Gastrocnemius medialis (tissue), 4 donors: ENCODE measurements at regions of chr10 and their contacts with region 1.

Region 1: DNA sequence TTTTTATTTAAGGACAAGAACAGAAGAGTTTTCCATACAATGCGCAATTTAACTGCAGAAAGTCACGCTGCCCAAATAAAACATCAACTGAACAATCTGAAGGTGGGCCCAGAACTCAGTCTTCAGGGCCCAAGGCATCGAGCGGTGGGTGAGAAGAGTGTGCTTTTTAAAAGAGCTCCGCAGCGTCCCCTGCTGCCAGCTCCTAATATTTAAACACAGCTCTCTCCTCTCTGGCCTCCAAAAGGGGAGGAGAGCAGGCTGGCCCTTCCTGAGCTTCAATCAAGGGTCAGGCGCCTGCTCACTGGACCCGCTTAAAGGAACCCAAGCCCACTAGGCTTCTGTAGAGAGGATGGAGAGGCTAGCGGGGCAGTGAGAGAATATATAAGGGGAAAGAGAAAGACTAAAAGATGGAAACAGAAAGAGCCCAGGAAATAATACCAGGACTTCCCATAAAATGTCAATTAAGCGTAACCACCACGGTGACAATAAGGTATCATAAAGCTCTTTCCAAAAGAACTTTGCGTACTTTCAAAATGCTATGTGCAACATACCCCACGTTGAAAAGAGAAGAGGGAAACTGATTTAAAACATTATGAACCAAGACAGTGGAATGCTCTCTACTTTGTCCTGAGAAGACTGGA is 2.8 kb downstream of the FAM53B start:
- DNase-seq: peak; percentile 82 to 90
- ATAC-seq: peak; percentile 42 to 54
- H3K4me3 ChIP-seq: peak overlapping the region; percentile 69 to 88 (median 78)
- H3K27ac ChIP-seq: peak overlapping the region; percentile 92 to 97 (median 92)
- H3K4me1 ChIP-seq: peaks cover 73 to 76% of the 10 kb centered on the region in 2 donors
- H3K27me3 ChIP-seq: no peaks in the 10 kb centered on the region
- CTCF ChIP-seq: peak; percentile 87 to 98 (median 96)
- POLR2A ChIP-seq: peak; percentile 31 to 47

Region 2: DNA sequence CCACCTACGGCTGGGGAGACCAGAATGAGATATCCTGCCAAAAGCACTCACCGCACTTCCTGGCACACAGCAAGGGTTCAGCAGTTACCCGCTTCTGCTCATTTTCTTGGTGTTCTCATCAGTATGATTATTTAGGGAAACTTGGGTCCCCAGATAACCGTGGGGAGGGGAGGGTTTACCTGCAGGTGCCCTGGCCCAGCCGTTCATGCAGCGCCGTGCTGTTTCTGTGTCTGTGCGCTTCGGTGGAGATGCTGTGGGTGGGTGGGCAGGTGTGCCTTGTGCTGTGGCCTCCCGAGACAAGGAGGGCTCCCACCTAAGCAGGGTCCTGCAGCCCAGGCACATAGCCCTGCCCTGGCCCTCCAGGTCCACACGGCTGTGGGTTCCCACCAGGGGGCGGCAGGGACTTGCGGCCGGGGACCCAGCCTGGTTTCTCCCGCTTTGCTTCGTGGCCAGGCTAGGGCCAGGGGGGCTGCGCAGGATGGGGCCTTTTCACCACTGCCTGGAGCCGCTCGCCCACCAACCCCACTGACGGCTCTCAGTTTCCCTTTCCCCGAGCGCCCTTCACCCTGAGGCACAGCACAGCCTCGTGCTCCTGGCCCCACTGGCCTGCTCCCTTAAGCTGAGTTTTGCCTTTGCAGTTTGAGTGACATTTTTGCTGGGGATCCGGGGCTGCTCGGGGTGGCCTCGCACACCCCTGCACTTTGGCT is 201.3 kb before region 1 on chr10:
- in situ Hi-C with region 1: loop called (anchors 5 to 25 kb)
- intact Hi-C with region 1: no loop called
- DNase-seq: peak; percentile 42 to 64
- ATAC-seq: peak; percentile 75 to 82
- H3K4me3 ChIP-seq: peak overlapping the region in 3 of 4 donors; percentile 6 to 29 (median 29)
- H3K27ac ChIP-seq: peak overlapping the region in 1 of 4 donors; percentile 37
- H3K4me1 ChIP-seq: peaks cover 13 to 15% of the 10 kb centered on the region in 2 donors
- H3K27me3 ChIP-seq: no peaks in the 10 kb centered on the region
- CTCF ChIP-seq: peak; percentile 93 to 95 (median 94)
- POLR2A ChIP-seq: no peak

Region 3: GRCh38 chr10:124632064-124632531 is 109.3 kb before region 1 on chr10:
- in situ Hi-C with region 1: loop called in 3 of 4 experiments (anchors 10 to 25 kb)
- intact Hi-C with region 1: loop called (anchors 1 kb)
- DNase-seq: peak; percentile 69 to 77
- ATAC-seq: peak; percentile 62 to 63
- H3K4me3 ChIP-seq: no peak overlapping the region
- H3K27ac ChIP-seq: peak overlapping the region; percentile 36 to 88 (median 77)
- H3K4me1 ChIP-seq: peaks cover 61 to 66% of the 10 kb centered on the region in 2 donors
- H3K27me3 ChIP-seq: no peaks in the 10 kb centered on the region
- CTCF ChIP-seq: peak; percentile 43 to 75 (median 68)
- POLR2A ChIP-seq: no peak

Region 4: GRCh38 chr10:124688889-124689670 is 52.3 kb before region 1 on chr10:
- in situ Hi-C with region 1: loop called in 1 of 4 experiments (anchors 5 kb)
- intact Hi-C with region 1: loop called (anchors 5 kb)
- DNase-seq: peak; percentile 82 to 84
- ATAC-seq: peak; percentile 35 to 51
- H3K4me3 ChIP-seq: no peak overlapping the region
- H3K27ac ChIP-seq: peak overlapping the region; percentile 81 to 98 (median 95)
- H3K4me1 ChIP-seq: peaks cover 80 to 95% of the 10 kb centered on the region in 2 donors
- H3K27me3 ChIP-seq: no peaks in the 10 kb centered on the region
- CTCF ChIP-seq: no peak
- POLR2A ChIP-seq: peak in 1 of 2 donors; percentile 31

Region 5: DNA sequence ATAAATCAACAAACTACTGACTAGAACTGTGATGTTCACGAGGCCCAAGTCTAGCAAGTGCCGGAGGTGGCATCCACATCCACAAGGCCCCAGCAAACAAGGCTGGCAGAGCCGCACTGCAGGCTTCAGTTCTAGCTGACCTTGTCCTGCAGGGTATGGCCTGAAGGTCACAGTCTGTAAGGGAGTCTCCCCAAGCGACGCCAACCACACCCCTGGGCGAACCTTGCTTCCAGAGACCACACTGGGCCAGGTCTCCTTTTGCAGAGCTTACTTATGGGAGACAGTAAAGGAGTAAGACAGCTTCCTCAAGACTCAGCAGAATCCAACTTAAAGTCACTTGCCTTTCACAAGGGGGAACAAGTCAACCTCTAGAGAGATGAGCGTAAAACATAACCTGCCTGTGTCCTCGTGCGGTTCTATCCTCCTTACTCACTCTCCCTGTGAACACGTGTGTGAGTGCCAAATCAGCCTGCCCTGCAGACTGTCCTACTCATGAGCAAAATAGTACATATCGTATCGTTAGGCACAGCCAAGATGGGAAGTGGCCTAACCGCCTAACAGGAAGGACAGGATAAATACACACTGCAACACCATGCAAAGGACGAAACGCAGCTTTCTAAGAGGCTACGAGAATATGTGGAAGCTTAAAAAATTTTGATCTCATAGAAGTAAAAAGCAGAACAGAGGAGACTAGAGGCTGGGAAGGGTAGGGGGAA is 19.9 kb before region 1 on chr10:
- in situ Hi-C with region 1: no loop called
- intact Hi-C with region 1: loop called (anchors 2 kb)
- DNase-seq: peak; percentile 93 to 94
- ATAC-seq: peak; percentile 85 to 87
- H3K4me3 ChIP-seq: no peak overlapping the region
- H3K27ac ChIP-seq: peak overlapping the region; percentile 92 to 97 (median 92)
- H3K4me1 ChIP-seq: peaks cover 97% of the 10 kb centered on the region in 2 donors
- H3K27me3 ChIP-seq: no peaks in the 10 kb centered on the region
- CTCF ChIP-seq: no peak
- POLR2A ChIP-seq: peak; percentile 64 to 75

Region 6: GRCh38 chr10:124791378-124792348 is 50.3 kb after region 1 on chr10 and contains the start of gene EEF1AKMT2:
- in situ Hi-C with region 1: no loop called
- intact Hi-C with region 1: no loop called
- DNase-seq: peak; percentile 51 to 70
- ATAC-seq: peak; percentile 95
- H3K4me3 ChIP-seq: peak within 1 kb of the TSS; percentile 74 to 99 (median 93)
- H3K27ac ChIP-seq: peak within 1 kb of the TSS; percentile 83 to 97 (median 90)
- H3K4me1 ChIP-seq: peaks cover 0 to 5% of the 10 kb centered on the region in 2 donors
- H3K27me3 ChIP-seq: no peaks in the 10 kb centered on the region
- CTCF ChIP-seq: peak; percentile 56 to 79 (median 75)
- POLR2A ChIP-seq: peak; percentile 47 to 63
- total RNA-seq, gene EEF1AKMT2: 7.9 to 13.5 (median 9.6) TPM